MCF 10A (cell line): ENCODE measurements at regions of chr19 and their contacts with region 1.

Region 1: DNA sequence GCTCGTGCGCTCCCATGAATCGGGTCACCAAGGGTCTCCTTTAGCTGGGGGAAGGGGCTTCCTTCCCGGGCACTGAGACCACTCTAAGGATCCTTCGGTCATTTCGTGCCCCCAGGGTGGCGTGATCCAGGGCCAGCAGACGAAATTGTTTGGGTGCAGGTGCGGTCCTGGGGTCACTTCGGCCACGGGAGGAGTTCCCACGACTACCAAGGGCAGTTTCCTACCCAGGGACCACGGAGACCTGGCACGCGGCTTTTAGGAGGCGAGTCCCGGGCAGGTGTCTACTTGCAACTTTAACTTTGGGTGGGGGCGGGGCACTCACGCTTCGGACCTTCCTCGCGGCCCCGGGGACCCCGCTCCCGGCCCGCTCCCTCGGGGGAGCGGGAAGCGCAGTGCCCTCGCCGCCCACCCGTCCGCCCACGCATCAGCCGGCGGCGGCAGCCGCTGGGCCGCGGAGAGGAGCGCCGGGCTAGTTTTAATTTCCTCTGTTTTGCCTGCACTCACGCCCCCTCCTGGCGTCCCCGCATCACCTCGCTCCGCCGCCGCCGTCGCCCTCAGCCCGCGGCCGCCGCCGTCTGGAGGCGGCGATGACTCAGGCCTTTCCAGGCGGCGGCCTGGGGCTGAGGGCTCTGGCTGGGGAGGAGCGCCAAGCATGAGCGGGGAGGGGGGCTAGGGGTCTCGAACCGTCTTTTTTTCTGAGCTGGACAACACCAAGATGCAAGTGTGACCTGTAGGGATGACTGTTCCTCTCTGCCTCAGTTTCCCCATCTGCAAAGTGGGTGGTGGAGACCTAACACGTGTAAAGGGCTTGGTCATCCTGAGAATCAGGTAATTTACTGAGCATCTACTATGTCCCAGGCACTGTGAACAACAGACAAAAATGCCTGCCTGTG is 21.8 kb downstream of the OLFM2 start:
- DNase-seq: peak; percentile 84
- H3K4me3 Mint-ChIP-seq: peak overlapping the region; percentile 45
- H3K27ac Mint-ChIP-seq: no peak overlapping the region
- H3K4me1 Mint-ChIP-seq: peaks cover 14% of the 10 kb centered on the region
- H3K27me3 Mint-ChIP-seq: peaks cover 11% of the 10 kb centered on the region
- CTCF ChIP-seq: peak; percentile 51

Region 2: DNA sequence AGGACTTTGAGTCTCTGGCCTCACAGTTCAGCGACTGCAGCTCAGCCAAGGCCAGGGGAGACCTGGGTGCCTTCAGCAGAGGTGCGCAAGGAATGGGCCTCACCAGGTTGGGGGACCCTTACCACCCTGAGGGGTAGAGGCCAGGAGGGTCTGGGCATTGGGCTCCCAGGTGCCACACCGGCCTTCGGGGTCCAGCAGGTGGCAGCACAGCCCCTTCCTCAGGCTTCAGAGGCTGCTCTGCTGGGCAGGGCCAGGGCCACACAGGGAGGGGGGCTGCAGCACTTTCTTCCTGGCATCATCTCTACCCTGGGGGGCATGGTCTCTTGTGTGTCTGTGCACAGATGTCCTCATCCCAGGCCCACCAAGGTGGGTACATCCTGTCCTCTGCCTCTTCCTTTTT is 66.5 kb before region 1 on chr19:
- CTCF ChIA-PET with region 1: interaction called, 3 read pairs
- POLR2A ChIA-PET with region 1: no interaction called
- intact Hi-C with region 1: loop called (anchors 1 kb)
- DNase-seq: no peak
- H3K4me3 Mint-ChIP-seq: no peak overlapping the region
- H3K27ac Mint-ChIP-seq: no peak overlapping the region
- H3K4me1 Mint-ChIP-seq: peaks cover 14% of the 10 kb centered on the region
- H3K27me3 Mint-ChIP-seq: no peaks in the 10 kb centered on the region
- CTCF ChIP-seq: peak; percentile 56

Region 3: GRCh38 chr19:9877775-9878510 is 36.6 kb before region 1 on chr19:
- CTCF ChIA-PET with region 1: no interaction called
- POLR2A ChIA-PET with region 1: no interaction called
- intact Hi-C with region 1: no loop called
- DNase-seq: peak; percentile 34
- H3K4me3 Mint-ChIP-seq: no peak overlapping the region
- H3K27ac Mint-ChIP-seq: no peak overlapping the region
- H3K4me1 Mint-ChIP-seq: no peaks in the 10 kb centered on the region
- H3K27me3 Mint-ChIP-seq: no peaks in the 10 kb centered on the region
- CTCF ChIP-seq: no peak